Left colon (tissue), 2 donors: ENCODE measurements at regions of chr6 and their contacts with region 1.

Region 1: GRCh38 chr6:37207903-37208456 is 38.0 kb downstream of the PIM1 start:
- DNase-seq: peak; percentile 87 to 89
- ATAC-seq: peak; percentile 70

Region 2: DNA sequence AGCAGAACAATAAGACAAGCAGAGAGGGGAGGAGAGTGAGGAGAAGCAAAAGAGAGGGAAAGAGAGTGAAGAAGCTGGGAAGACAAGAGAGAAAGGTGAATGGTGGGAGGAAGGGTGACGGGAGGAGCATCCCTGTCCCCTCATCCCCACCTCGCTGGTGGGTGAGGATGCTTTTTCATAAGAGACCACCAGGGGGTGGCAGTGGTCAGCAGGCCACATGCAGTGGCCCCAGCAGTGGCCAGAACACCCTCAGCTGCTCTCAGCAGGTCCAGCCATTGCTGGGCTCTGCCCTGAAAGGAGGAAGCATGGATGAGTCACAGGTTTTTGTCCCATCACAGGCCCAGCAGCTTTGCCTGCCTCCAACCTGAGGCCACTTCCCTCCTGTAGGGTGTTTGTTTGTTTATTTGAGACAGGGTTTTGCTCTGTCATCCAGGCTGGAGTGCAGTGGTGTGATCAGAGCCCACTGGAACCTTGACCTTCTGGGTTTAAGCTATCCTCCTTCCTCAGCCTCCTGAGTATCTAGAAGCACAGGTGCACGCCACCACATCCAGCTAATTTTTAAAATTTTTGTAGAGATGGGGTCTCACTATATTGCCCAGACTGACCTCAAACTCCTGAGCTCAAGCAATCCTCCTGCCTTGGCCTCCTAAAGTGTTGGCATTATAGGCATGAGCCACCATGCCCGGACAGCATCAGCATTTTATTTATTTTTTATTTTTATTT is 178.6 kb before region 1 on chr6:
- intact Hi-C with region 1: loop called (anchors 10 kb)
- DNase-seq: peak in 1 of 2 donors; percentile 72
- ATAC-seq: peak; percentile 84